ENCODE measurements at regions of chr2 and their contacts with region 1.

Region 1: DNA sequence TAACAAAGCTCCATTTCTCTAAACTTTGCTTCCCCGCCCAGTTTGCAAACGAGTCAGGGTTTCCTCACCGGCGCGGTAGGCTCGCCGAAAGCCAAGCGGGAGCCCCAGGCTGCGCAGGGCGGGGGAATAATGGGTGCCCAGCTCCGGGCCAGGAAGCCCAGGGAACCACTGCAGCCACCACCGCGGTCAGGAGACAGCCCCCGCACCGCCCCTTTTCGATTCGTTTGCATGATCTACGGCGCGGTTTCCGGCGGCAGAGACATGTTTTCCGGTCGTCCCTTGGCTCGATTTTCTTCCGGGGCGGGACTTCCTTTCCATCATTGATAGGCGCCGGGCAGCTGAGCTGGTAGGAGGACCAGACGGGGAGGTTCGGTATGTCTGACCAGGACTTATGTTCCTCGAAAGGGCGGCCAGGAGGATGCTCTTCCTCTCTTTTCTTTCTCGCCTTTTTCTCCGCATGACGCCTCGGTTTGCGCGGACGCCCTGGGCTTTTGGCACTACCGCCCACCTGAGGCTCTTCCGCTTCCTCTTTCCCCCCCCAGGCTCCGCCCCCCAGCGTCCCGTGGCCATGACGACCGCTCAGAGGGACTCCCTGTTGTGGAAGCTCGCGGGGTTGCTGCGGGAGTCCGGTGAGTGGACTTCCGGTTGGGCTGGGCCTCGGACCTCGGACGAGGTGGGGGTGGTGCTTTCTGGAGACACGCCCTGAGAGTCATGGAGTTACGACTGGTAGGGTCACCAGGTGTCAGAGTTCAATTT is at the start of gene STK11IP:
- DNase-seq: peak; percentile 96
- H3K4me3 Mint-ChIP-seq: peak within 1 kb of the TSS; percentile 94
- H3K27ac Mint-ChIP-seq: peak within 1 kb of the TSS; percentile 94
- H3K4me1 Mint-ChIP-seq: peaks cover 10% of the 10 kb centered on the region
- H3K27me3 Mint-ChIP-seq: no peaks in the 10 kb centered on the region
- total RNA-seq, gene STK11IP: 32.1 TPM

Region 2: DNA sequence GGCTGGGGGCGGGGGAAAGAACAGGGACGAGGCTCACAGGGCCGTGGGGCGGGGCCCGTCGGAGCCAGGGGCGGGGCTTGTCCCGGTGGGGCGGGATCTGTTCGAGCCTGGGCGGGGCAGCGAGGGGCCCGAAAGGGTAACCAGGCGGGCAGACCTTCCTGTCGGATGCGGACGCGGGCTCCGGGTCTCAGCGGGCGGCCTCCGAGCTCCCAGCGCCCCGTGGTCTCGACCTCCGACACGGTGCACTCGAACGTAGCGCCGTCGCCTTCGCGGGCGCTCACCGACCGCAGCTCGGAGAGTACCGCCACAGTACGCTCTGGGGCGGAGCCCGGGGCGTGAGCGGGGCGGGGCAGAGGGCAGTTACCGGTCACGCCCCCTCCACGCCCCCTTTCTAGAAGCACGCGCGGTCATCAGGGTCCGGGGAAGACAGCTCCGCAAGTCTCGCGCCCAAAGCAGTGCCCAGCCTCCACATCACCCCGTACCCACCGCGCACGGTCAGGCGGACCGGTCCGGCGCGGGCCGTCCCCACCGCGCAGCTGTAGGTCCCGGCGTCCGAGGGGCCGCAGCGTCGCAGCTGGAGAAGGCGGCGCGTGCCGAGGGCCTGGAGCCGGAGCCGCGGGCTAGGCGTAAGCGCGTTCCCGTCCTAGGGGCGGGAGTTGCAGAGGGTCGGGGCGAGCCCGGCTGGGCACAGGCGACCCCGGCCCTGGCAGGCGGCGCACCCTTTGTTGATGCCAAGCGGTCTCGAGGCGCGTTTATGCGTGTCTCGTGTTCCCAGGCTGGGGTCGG is 45.2 kb before region 1 on chr2:
- CTCF ChIA-PET with region 1: no interaction called
- intact Hi-C with region 1: loop called (anchors 1 kb)
- DNase-seq: peak; percentile 82
- H3K4me3 Mint-ChIP-seq: peak overlapping the region; percentile 76
- H3K27ac Mint-ChIP-seq: no peak overlapping the region
- H3K4me1 Mint-ChIP-seq: peaks cover 8% of the 10 kb centered on the region
- H3K27me3 Mint-ChIP-seq: peaks cover 31% of the 10 kb centered on the region

Region 3: DNA sequence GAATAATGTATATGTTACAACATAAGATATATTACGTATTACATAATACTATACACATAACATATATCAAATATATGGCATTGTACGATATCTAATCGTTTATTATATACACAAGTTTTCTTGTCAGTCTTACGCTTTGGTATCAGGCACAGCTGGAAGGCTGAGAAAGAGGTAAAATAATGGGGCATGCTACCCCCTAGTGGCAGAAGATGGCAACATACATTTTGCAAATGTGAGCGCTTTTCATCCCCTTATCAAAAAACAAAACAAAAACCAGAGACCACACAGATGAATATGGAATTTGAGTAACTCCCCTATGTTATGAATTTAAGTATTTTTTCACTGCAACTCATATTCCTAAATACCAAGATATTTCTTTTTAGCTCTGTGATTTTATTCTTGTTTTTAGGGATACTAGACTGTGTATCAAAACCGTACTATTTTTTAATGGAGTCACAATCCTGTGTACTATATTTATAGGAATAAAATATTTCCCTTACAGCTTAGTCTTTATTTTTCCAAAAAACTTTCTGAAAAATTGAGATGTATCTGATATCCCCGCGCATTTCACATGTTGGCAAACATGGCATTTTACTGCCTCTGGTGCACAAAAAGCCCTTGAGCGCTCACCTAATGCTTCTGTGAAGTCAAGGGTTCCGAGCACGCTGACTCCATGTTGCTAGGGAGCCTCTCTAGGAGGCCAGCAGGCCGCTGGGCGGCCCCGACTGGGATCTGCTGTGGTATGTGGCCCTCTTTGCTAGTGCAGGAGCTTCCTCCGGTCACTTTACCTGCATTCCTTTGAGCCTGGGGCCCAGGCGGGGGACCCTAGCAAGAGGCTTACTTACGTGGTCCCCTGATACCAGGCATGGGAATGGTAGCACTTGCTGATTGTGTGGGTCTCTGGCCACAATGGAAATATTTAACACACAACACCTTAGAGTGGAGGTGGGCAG is 92.2 kb after region 1 on chr2:
- CTCF ChIA-PET with region 1: no interaction called
- intact Hi-C with region 1: loop called (anchors 1 kb)
- DNase-seq: peak; percentile 71
- H3K4me3 Mint-ChIP-seq: no peak overlapping the region
- H3K27ac Mint-ChIP-seq: no peak overlapping the region
- H3K4me1 Mint-ChIP-seq: peaks cover 7% of the 10 kb centered on the region
- H3K27me3 Mint-ChIP-seq: peaks cover 21% of the 10 kb centered on the region

Measured in activated naive CD4-positive, alpha-beta T cell treated with anti-CD3 and anti-CD28 coated beads for 36 hours (primary cell).